Posterior cingulate gyrus (tissue), 11 donors: ENCODE measurements at regions of chr2 and their contacts with region 1.

Region 1: DNA sequence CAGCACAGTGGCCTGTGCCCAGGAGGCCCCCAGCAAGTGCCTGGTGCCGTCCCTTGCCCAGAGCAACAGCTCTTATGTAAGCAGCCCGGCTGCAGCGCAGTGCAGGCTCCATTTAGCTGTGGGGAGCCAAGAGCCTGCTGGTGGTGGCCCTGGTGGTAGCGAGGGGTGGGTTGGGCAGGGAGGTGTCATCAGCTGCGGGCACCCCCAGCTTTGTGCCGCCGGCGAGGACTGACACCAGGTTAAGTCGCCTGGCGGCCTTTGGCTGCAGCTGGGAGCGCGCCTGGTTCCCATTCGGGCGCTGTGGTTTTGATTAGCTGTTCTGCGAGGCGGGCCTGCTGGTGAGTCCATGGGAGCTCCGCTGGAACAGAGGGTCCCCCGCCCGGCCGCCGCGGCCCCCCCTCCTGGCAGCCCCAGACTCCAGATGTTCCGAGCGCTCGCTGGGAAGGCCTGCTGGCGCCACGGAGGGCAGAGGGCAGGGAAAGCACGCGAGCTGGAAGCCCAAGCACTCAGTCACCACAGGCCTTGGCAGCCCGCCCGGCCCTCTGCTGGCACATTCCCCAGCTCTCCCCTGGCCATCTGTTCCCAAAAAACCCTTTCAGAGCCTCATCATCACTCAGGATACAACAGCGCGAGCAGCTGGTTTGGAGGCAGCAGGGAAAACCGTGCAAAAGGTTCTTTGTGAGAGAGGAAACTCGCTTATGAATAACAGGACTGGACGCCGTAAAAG is 18.4 kb downstream of the ATOH8 start:
- DNase-seq: peak; percentile 92 to 99 (median 96)

Region 2: GRCh38 chr2:85737481-85737880 is 34.7 kb before region 1 on chr2:
- intact Hi-C with region 1: loop called (anchors 5 kb)
- DNase-seq: peak in 1 of 10 donors; percentile 64

Region 3: GRCh38 chr2:85797921-85798320 is 25.7 kb after region 1 on chr2:
- intact Hi-C with region 1: loop called (anchors 2 kb)
- DNase-seq: peak in 4 of 10 donors; percentile 6 to 76 (median 50)

Region 4: DNA sequence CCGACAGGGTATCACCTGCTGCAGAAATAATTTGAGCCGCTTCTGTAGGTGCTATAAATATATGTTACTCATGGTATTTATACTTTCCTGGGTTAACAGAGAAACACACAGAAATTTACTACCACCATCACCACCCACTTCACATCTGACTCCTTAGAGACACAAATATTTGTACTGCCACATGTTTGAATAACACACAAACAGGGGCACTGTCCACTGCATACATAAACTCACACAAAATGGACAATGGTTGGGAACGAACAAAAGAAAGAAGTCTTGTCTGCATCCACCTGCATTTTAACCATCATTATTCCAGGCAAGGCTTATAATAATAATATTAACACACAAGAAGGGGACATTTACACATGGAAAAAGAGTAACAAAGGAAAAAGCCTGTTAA is 399.1 kb after region 1 on chr2:
- intact Hi-C with region 1: no loop called
- DNase-seq: no peak